Cardiac septum (tissue), 1 donor: ENCODE measurements at regions of chr1 and their contacts with region 1.

Region 1: GRCh38 chr1:173202430-173203145 is 4.5 kb downstream of the TNFSF4 start:
- DNase-seq: no peak

Region 2: GRCh38 chr1:172745014-172745413 is 457.6 kb before region 1 on chr1:
- intact Hi-C with region 1: loop called (anchors 2 kb)
- DNase-seq: no peak

Region 3: DNA sequence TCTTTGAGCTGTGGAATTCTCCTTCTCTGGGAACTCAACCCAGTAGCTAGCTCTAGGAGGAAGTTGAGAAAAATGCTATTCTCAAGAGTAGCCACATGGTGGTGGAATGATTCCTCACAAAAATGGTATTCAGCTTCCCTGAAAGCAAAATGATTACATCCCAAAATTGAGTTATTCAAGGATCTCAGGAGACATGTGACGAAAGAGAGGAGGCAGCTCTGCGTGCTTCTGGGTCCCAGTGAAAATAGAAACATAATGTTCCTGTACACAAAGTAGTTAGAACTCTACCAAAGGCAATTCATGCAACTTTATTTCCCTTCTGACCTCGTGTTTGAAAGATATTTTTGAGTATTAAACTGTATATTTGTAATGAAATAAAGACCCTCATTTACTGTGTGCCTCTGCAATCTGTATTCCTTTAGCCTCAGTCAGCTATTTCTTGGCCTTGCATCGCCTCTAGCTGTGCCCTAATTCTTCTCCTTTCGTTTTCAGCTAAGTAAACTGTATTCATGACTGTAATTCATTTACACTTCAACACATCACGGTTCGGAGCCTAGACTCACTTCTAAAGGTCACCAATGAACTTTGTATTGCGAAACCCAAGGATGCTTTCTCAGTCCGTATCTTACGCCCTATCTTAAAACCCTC is 376.4 kb before region 1 on chr1:
- intact Hi-C with region 1: loop called (anchors 2 kb)
- DNase-seq: no peak

Region 4: GRCh38 chr1:173476664-173477285 is 274.2 kb after region 1 on chr1:
- intact Hi-C with region 1: no loop called
- DNase-seq: peak; percentile 96